AG04450 (cell line): ENCODE measurements at regions of chr2 and their contacts with region 1.

Region 1: GRCh38 chr2:207258263-207258991 is 92.7 kb upstream of the KLF7 start:
- DNase-seq: peak; percentile 99
- H3K4me3 ChIP-seq: no peak overlapping the region
- H3K27ac ChIP-seq: peak overlapping the region; percentile 97
- H3K27me3 ChIP-seq: no peaks in the 10 kb centered on the region
- CTCF ChIP-seq: peak; percentile 30

Region 2: GRCh38 chr2:207238831-207239701 is 19.4 kb before region 1 on chr2:
- CTCF ChIA-PET with region 1: interaction called, 3 read pairs
- POLR2A ChIA-PET with region 1: interaction called, 52 read pairs
- DNase-seq: peak; percentile 98
- H3K4me3 ChIP-seq: no peak overlapping the region; the same call in 1 of the 2 replicates
- H3K27ac ChIP-seq: peak overlapping the region; percentile 90
- H3K27me3 ChIP-seq: no peaks in the 10 kb centered on the region
- CTCF ChIP-seq: no peak

Region 3: GRCh38 chr2:207334624-207335371 is 76.4 kb after region 1 on chr2:
- CTCF ChIA-PET with region 1: no interaction called
- POLR2A ChIA-PET with region 1: interaction called, 11 read pairs
- DNase-seq: peak; percentile 93
- H3K4me3 ChIP-seq: peak overlapping the region; percentile 42
- H3K27ac ChIP-seq: peak overlapping the region; percentile 97
- H3K27me3 ChIP-seq: no peaks in the 10 kb centered on the region
- CTCF ChIP-seq: no peak

Region 4: GRCh38 chr2:207734264-207734635 is 475.8 kb after region 1 on chr2:
- CTCF ChIA-PET with region 1: no interaction called
- POLR2A ChIA-PET with region 1: no interaction called
- DNase-seq: no peak
- H3K4me3 ChIP-seq: no peak overlapping the region
- H3K27ac ChIP-seq: no peak overlapping the region
- H3K27me3 ChIP-seq: no peaks in the 10 kb centered on the region
- CTCF ChIP-seq: peak; percentile 70